ENCODE measurements at regions of chr16 and their contacts with region 1.

Region 1: DNA sequence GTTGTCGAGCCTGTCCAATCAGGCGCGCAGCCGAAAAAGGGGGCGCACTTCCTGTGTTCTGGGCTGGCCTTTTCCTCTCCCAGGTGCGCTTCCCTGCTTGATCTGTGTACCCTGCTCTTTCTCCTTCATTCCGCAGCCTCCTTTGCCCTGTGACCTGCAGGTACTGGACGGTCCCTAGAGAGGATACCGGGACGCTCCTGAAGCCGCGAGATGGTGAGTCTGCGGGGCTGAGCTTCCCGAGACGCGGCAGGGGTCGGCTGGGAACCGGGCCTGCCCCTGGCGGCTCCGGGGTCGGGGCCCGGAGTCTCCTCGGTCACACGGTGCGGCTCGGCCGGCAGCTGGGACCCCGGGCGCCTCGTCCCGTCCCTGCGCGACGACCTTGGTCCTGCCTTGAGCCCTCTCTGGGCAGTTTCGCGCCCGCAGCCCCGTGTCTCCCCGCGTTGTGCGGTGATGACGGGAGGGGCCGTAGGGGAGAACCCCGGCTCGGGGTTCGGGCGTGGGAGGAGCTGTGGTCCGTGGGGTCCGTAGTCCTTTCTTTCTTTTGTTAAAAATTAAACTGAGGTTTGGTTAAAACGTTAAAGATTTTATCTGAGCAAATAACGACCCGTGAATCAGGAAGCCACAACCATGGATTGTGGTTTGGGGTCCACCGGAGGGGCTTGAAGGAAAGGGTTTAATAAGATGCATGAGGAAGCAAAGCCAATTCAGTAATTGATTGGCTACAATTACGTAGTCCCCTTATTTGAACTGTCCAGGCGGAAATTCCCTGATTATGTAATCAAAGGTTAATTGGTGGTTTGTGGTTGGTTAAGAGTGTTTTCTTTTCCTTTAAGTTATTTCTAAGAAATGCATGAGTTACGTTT is 172.8 kb upstream of the ZNF267 start:
- DNase-seq: peak; percentile 72
- H3K4me3 Mint-ChIP-seq: peak overlapping the region; percentile 91
- H3K27ac Mint-ChIP-seq: peak overlapping the region; percentile 89
- H3K4me1 Mint-ChIP-seq: peaks cover 28% of the 10 kb centered on the region
- H3K27me3 Mint-ChIP-seq: no peaks in the 10 kb centered on the region

Region 2: GRCh38 chr16:31344712-31345111 is 356.0 kb before region 1 on chr16:
- intact Hi-C with region 1: loop called (anchors 10 kb)
- DNase-seq: no peak
- H3K4me3 Mint-ChIP-seq: no peak overlapping the region
- H3K27ac Mint-ChIP-seq: peak overlapping the region; percentile 53
- H3K4me1 Mint-ChIP-seq: peaks cover 42% of the 10 kb centered on the region
- H3K27me3 Mint-ChIP-seq: peaks cover 11% of the 10 kb centered on the region

Region 3: GRCh38 chr16:31713071-31713944 is 12.6 kb after region 1 on chr16:
- intact Hi-C with region 1: loop called (anchors 1 kb)
- DNase-seq: peak; percentile 86
- H3K4me3 Mint-ChIP-seq: peak overlapping the region; percentile 99
- H3K27ac Mint-ChIP-seq: peak overlapping the region; percentile 99
- H3K4me1 Mint-ChIP-seq: peaks cover 31% of the 10 kb centered on the region
- H3K27me3 Mint-ChIP-seq: no peaks in the 10 kb centered on the region

Measured in activated T-helper 1 cell treated with anti-CD3 and anti-CD28 coated beads, Interleukin-12 subunit alpha, Interleukin-12 subunit beta, Interleukin-2, Interleukin-4 antibody, amounts not matched to agents 30 ng/mL and 10 ng/mL and 1 ng/mL, durations not matched to agents 14 hours and 24 hours and 36 hours (primary cell).